OCI-LY7 (cell line): ENCODE measurements at regions of chr12 and their contacts with region 1.

Region 1: GRCh38 chr12:7219599-7220243 is 30.2 kb downstream of the PEX5 start:
- DNase-seq: peak; percentile 84
- H3K4me3 ChIP-seq: no peak overlapping the region
- H3K27ac ChIP-seq: no peak overlapping the region
- H3K4me1 ChIP-seq: no peaks in the 10 kb centered on the region
- CTCF ChIP-seq: peak; percentile 98

Region 2: DNA sequence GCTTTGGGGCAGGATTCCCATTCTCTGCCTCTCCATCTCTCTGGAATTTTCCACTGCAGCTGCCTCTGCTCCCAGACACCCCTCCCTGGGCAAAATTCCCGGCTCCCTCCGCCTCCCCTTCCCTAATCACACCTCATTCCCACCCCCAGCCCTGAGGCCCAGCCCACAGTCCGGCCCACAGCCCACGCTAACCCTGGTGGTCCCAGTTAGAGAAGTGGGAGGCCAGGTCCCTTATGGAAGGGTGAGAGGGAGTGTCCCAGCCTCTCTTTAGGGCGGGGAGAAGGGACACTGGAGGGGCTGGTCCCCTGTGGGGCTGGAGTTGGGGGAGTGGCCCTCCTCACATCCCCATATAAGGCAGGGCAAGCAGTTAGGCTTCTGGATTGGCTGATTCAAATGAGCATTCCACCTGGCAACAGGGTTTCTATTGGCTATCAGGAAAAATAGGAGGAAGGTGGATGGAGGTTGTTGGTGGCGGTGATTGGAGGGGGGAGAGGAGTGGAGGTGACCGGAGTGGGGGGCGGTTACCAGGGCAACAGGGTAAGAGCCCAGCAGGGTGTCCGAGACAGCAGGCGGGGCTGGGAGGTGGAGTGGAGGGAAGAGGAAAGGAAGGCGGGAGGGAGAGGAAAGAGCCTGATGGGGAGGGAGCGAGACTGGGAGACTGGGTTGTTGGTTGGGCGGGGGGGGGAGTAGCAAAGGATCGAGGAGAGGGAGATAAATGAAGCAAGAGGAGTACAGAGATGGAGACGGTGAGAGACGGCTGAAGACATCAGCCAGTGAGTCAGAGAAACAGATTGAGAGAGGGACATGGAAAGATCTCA is 455.5 kb before region 1 on chr12:
- CTCF ChIA-PET with region 1: no interaction called
- POLR2A ChIA-PET with region 1: no interaction called
- intact Hi-C with region 1: no loop called
- DNase-seq: peak; percentile 90
- H3K4me3 ChIP-seq: peak overlapping the region; percentile 43
- H3K27ac ChIP-seq: no peak overlapping the region
- H3K4me1 ChIP-seq: peaks cover 33% of the 10 kb centered on the region
- CTCF ChIP-seq: no peak

Region 3: GRCh38 chr12:7207866-7208625 is 11.7 kb before region 1 on chr12:
- CTCF ChIA-PET with region 1: no interaction called
- POLR2A ChIA-PET with region 1: no interaction called
- intact Hi-C with region 1: no loop called
- DNase-seq: no peak
- H3K4me3 ChIP-seq: no peak overlapping the region
- H3K27ac ChIP-seq: no peak overlapping the region
- H3K4me1 ChIP-seq: peaks cover 28% of the 10 kb centered on the region
- CTCF ChIP-seq: no peak

Region 4: DNA sequence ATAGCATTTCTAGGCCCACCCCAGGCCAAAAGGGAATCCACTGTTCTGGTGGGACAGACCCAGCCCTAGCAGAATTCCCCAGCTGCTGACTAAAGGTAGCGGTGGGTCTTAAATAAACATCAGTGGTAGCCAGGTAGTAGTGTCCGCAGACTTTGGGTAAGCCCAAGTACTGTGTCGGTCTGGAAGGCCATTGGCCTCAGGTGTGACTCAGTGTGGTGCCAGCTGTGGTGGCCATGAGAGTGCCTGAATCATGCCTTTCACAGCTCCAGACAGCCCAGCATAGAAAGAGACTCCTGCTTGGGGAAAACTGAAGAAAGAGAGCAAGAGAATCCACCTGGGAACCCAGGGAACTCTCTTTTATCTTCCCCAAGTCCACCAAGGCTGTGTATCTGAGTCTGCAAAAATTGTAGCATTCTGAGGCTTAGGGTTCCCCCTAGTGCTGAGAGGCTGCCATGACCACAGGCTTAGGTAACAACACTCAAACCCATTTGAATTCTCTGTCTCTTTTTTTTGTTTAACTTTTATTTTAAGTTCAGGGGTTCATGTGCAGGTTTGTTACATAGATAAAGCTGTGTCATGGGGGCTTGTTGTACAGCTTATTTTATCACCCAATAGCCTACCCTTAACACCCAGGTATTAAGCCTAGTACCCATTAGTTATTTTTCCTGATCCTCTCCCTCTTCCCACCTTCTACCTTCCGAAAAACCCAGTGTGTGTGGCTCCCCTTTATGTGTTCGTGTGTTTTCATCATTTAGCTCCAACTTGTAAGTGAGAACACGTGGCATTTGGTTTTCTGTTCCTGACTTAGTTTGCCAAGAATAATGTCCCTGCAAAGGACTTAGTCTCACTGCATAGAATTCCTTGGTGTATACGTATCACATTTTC is 240.9 kb after region 1 on chr12:
- CTCF ChIA-PET with region 1: no interaction called
- POLR2A ChIA-PET with region 1: no interaction called
- intact Hi-C with region 1: loop called (anchors 1 kb)
- DNase-seq: peak; percentile 54
- H3K4me3 ChIP-seq: no peak overlapping the region
- H3K27ac ChIP-seq: no peak overlapping the region
- H3K4me1 ChIP-seq: no peaks in the 10 kb centered on the region
- CTCF ChIP-seq: peak; percentile 85